AG04450 (cell line): ENCODE measurements at regions of chr2 and their contacts with region 1.

Region 1: GRCh38 chr2:230798769-230799399 is 65.9 kb upstream of the ITM2C start:
- DNase-seq: no peak
- H3K4me3 ChIP-seq: no peak overlapping the region
- H3K27ac ChIP-seq: no peak overlapping the region
- H3K27me3 ChIP-seq: no peaks in the 10 kb centered on the region
- CTCF ChIP-seq: peak; percentile 75

Region 2: DNA sequence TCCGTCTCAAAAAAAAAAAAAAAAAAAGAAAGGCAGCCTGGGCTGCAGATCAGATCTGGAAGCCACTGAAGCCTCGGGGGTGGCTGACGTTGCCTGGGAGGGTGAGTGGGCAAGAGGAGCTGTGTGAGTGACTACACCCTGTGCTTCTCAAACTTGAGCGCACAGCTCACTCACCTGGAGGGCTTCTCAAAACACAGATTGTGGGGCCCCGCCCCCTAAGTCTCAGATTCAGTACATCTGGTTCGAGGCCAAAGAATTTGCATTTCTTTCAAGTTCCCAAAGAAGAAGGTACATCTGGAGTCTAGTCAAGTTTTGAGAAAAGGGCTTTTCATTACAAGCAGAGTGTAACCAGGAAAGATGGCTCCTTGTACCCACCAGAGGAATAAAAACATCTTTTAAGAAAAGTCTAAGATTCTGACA is 184.0 kb before region 1 on chr2:
- CTCF ChIA-PET with region 1: interaction called, 28 read pairs
- POLR2A ChIA-PET with region 1: interaction called, 4 read pairs
- DNase-seq: no peak
- H3K4me3 ChIP-seq: no peak overlapping the region
- H3K27ac ChIP-seq: no peak overlapping the region
- H3K27me3 ChIP-seq: no peaks in the 10 kb centered on the region
- CTCF ChIP-seq: no peak

Region 3: DNA sequence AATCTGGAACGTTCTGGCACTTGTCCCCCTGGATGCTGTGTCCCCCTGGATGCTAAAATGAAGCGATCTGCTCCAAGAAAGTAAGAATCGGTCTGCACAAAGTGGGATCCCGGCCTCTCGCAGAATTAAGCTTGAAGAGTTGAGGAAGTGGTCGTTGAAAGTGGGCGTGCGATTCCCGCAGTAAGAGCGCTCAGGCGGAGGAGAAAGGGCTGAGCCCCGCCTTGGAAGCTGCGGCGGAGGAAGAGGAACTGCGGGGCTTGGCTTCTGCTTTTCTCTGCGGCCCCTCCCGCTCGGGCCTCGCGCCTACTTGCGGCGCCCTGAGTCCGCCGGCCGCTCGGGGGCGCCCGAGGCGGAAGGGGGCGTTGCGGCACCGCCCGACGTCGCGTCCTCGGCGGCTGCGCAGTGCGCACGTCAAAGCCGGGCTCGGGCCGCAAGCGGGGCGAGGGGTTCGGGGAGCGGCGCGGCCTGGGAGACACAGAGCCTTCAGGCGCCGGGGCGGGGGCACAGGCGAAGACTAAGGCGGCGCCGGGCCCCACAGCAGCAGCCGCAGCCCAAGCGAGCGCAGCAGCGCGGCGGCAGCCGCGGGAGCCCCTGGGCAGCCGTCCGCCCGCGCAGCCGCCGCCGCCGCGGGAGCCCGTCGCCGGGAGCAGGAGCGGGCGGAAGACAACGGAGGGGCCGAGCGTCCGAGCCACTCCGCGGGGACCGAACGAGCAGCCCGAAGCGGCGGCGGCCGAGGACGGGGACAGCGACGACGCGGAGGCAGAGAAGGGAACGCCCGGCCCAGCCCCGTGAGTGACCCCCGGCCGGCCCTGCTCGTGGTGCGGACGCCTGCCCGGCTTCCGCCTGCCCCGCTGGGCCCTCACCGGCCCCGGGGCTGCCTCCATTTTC is 86.2 kb before region 1 on chr2 and contains the start of gene CAB39:
- CTCF ChIA-PET with region 1: interaction called, 50 read pairs
- POLR2A ChIA-PET with region 1: interaction called, 8 read pairs
- DNase-seq: peak; percentile 67
- H3K4me3 ChIP-seq: peak within 1 kb of the TSS; percentile 84
- H3K27ac ChIP-seq: peak within 1 kb of the TSS; percentile 90
- H3K27me3 ChIP-seq: no peaks in the 10 kb centered on the region
- CTCF ChIP-seq: peak; percentile 62
- polyA plus RNA-seq, gene CAB39: 60.1 and 72.7 TPM in 2 replicates

Region 4: GRCh38 chr2:230721712-230722111 is 77.2 kb before region 1 on chr2:
- CTCF ChIA-PET with region 1: interaction called, 15 read pairs
- POLR2A ChIA-PET with region 1: no interaction called
- DNase-seq: no peak
- H3K4me3 ChIP-seq: no peak overlapping the region
- H3K27ac ChIP-seq: no peak overlapping the region
- H3K27me3 ChIP-seq: no peaks in the 10 kb centered on the region
- CTCF ChIP-seq: no peak

Region 5: GRCh38 chr2:230738391-230738811 is 60.5 kb before region 1 on chr2:
- CTCF ChIA-PET with region 1: interaction called, 13 read pairs
- POLR2A ChIA-PET with region 1: no interaction called
- DNase-seq: no peak
- H3K4me3 ChIP-seq: no peak overlapping the region
- H3K27ac ChIP-seq: no peak overlapping the region
- H3K27me3 ChIP-seq: no peaks in the 10 kb centered on the region
- CTCF ChIP-seq: no peak

Region 6: GRCh38 chr2:230762317-230762896 is 36.5 kb before region 1 on chr2:
- CTCF ChIA-PET with region 1: interaction called, 10 read pairs
- POLR2A ChIA-PET with region 1: interaction called, 4 read pairs
- DNase-seq: no peak
- H3K4me3 ChIP-seq: no peak overlapping the region
- H3K27ac ChIP-seq: no peak overlapping the region
- H3K27me3 ChIP-seq: no peaks in the 10 kb centered on the region
- CTCF ChIP-seq: peak; percentile 65

Region 7: GRCh38 chr2:230814616-230815015 is 15.7 kb after region 1 on chr2:
- CTCF ChIA-PET with region 1: interaction called, 36 read pairs
- POLR2A ChIA-PET with region 1: no interaction called
- DNase-seq: peak; percentile 15
- H3K4me3 ChIP-seq: no peak overlapping the region
- H3K27ac ChIP-seq: no peak overlapping the region
- H3K27me3 ChIP-seq: no peaks in the 10 kb centered on the region
- CTCF ChIP-seq: peak; percentile 70